ENCODE measurements at regions of chr2 and their contacts with region 1.

Region 1: DNA sequence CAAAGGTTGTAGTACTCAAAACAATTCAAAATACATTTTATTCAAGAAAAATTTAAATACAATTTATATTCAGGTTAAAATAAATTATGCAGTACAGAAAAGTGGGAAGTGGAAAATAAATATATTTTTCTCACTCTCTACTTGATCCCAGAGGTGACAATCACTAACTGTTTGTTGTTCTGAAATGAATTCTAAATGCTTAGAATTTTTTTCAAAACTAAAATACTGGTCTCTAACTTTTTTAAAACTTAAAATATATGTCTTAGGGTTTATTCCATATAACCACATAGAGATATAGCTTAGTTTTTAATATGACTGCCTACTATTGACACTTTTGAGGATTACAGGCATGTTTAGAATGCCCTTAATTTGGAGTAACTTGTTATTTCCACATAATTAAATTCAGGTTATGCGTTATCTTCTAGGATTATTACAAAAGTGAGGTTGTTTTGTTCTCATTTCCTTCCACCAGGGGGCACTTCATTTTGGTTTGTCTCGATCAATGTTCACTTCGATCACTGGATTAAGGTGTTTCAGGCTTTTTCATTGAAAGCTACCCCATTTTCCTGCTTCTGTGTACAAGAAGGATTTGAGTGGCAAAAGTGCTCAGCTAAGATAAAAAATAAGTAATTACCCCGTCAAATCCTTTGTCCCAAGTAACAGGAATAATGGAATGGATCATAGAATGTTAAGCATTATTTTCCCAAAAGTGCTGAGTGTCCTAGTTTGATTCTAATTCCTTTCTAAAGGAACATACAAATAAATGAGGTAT is 27.1 kb upstream of the TFPI start:
- DNase-seq: peak in 1 of 2 experiments; percentile 62
- H3K4me3 ChIP-seq: no peak overlapping the region
- H3K4me3 Mint-ChIP-seq: no peak overlapping the region
- H3K27ac Mint-ChIP-seq: no peak overlapping the region
- H3K4me1 ChIP-seq: peaks cover 17% of the 10 kb centered on the region
- H3K4me1 Mint-ChIP-seq: no peaks in the 10 kb centered on the region
- H3K27me3 ChIP-seq: no peaks in the 10 kb centered on the region
- H3K27me3 Mint-ChIP-seq: peaks cover 4% of the 10 kb centered on the region
- CTCF ChIP-seq: peak; percentile 64 to 71

Region 2: GRCh38 chr2:187499941-187500532 is 81.3 kb before region 1 on chr2:
- CTCF ChIA-PET with region 1: interaction called, 25 read pairs
- POLR2A ChIA-PET with region 1: no interaction called
- intact Hi-C with region 1: loop called (anchors 1 kb)
- DNase-seq: peak; percentile 52 to 71
- H3K4me3 ChIP-seq: no peak overlapping the region
- H3K4me3 Mint-ChIP-seq: no peak overlapping the region
- H3K27ac Mint-ChIP-seq: no peak overlapping the region
- H3K4me1 ChIP-seq: peaks cover 7% of the 10 kb centered on the region; the same call in 1 of the 2 replicates
- H3K4me1 Mint-ChIP-seq: peaks cover 19% of the 10 kb centered on the region
- H3K27me3 ChIP-seq: no peaks in the 10 kb centered on the region
- H3K27me3 Mint-ChIP-seq: no peaks in the 10 kb centered on the region
- CTCF ChIP-seq: peak; percentile 80 to 91

Region 3: DNA sequence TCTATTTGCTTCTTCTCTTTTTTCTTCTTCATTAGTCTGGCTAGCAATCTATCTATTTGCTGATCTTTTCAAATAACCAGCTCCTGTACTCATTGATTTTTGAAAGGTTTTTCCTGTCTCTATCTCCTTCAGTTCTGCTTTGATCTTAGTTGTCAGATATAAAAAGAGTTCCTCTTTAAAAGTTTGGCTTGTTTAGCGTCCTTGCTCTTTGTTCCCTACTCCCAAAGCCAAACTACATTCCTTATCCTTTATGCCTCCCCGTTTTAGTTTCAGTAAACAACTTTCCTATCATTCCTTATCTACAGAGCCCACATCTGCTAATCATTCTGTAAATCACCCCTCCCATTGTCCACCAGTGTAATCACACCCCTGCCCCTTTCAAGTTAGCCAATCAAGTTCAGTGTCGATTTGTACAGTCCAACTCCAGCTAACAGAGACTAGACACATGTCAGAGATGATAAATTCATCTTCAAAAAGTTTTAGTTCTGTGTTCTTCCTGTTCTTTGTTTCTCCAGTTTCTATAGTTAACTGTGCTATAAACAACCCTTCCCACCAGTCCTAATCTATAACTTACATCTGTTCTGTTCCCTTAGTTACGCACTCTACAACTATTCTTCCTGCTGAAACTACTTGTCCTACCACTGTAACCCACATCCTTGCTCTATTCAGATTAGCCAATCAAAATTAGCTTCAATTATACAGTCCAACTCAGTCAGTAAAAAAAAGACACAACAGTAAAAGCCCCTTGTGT is 71.5 kb before region 1 on chr2:
- CTCF ChIA-PET with region 1: no interaction called
- POLR2A ChIA-PET with region 1: no interaction called
- intact Hi-C with region 1: loop called (anchors 2 kb)
- DNase-seq: peak; percentile 65 to 69
- H3K4me3 ChIP-seq: no peak overlapping the region
- H3K4me3 Mint-ChIP-seq: peak overlapping the region; percentile 45
- H3K27ac Mint-ChIP-seq: peak overlapping the region; percentile 56
- H3K4me1 ChIP-seq: peaks cover 32% of the 10 kb centered on the region
- H3K4me1 Mint-ChIP-seq: peaks cover 42% of the 10 kb centered on the region
- H3K27me3 ChIP-seq: no peaks in the 10 kb centered on the region
- H3K27me3 Mint-ChIP-seq: no peaks in the 10 kb centered on the region
- CTCF ChIP-seq: no peak

Region 4: DNA sequence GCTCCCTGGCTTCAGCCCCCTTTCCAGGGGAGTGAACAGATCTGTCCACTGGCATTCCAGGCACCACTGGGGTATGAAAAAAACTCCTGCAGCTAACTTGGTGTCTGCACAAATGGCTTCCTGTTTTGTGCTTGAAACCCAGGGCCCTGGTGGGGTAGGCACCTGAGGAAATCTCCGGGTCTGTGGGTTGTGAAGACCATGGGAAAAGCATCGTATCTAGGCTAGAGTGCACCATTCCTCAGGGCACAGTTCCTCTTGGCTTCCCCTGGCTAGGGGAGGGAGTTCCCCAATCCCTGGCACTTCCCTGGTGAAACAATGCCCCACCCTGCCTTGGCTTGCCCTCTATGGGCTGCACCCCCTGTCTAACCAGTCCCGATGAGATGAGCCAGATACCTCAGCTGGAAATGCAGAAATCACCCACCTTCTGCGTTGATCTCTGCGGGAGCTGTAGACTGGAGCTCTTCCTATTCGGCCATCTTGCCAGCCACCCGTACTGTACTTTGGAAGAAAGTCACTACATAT is 61.1 kb before region 1 on chr2:
- CTCF ChIA-PET with region 1: no interaction called
- POLR2A ChIA-PET with region 1: no interaction called
- intact Hi-C with region 1: no loop called
- DNase-seq: no peak
- H3K4me3 ChIP-seq: no peak overlapping the region
- H3K4me3 Mint-ChIP-seq: no peak overlapping the region
- H3K27ac Mint-ChIP-seq: peak overlapping the region; percentile 58
- H3K4me1 ChIP-seq: no peaks in the 10 kb centered on the region; the same call in 1 of the 2 replicates
- H3K4me1 Mint-ChIP-seq: no peaks in the 10 kb centered on the region
- H3K27me3 ChIP-seq: no peaks in the 10 kb centered on the region
- H3K27me3 Mint-ChIP-seq: no peaks in the 10 kb centered on the region
- CTCF ChIP-seq: no peak

Region 5: GRCh38 chr2:187541086-187542085 is 39.9 kb before region 1 on chr2:
- CTCF ChIA-PET with region 1: no interaction called
- POLR2A ChIA-PET with region 1: interaction called, 6 read pairs
- intact Hi-C with region 1: loop called (anchors 1 kb)
- DNase-seq: no peak
- H3K4me3 ChIP-seq: no peak overlapping the region; the same call in 1 of the 2 replicates
- H3K4me3 Mint-ChIP-seq: peak overlapping the region; percentile 56
- H3K27ac Mint-ChIP-seq: peak overlapping the region; percentile 30
- H3K4me1 ChIP-seq: peaks cover 22% of the 10 kb centered on the region
- H3K4me1 Mint-ChIP-seq: peaks cover 25% of the 10 kb centered on the region
- H3K27me3 ChIP-seq: no peaks in the 10 kb centered on the region
- H3K27me3 Mint-ChIP-seq: no peaks in the 10 kb centered on the region
- CTCF ChIP-seq: no peak

Region 6: GRCh38 chr2:187594801-187595200 is 13.5 kb after region 1 on chr2:
- CTCF ChIA-PET with region 1: no interaction called
- POLR2A ChIA-PET with region 1: no interaction called
- intact Hi-C with region 1: no loop called
- DNase-seq: no peak
- H3K4me3 ChIP-seq: no peak overlapping the region
- H3K4me3 Mint-ChIP-seq: no peak overlapping the region
- H3K27ac Mint-ChIP-seq: no peak overlapping the region
- H3K4me1 ChIP-seq: no peaks in the 10 kb centered on the region
- H3K4me1 Mint-ChIP-seq: no peaks in the 10 kb centered on the region
- H3K27me3 ChIP-seq: no peaks in the 10 kb centered on the region
- H3K27me3 Mint-ChIP-seq: no peaks in the 10 kb centered on the region
- CTCF ChIP-seq: no peak

Region 7: DNA sequence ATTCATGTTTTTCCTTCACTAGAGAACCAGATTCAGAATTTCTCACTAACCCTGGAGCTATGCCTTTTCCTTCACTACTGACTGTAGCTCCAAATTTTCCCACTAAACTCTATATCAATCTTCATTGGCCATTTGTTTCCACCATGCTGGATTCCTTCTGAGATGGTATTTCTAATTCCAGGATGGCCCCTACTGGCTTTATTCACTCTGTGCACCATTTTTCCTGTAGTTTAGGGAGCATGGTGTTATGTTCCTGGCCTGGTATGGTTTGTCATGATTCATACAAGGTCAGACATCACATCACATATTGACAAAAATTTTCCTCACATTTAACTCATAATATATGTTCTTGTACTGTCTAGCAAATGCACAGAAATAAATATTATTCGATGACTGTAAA is 202.1 kb after region 1 on chr2:
- CTCF ChIA-PET with region 1: no interaction called
- POLR2A ChIA-PET with region 1: no interaction called
- intact Hi-C with region 1: loop called (anchors 1 kb)
- DNase-seq: no peak
- H3K4me3 ChIP-seq: no peak overlapping the region
- H3K4me3 Mint-ChIP-seq: no peak overlapping the region
- H3K27ac Mint-ChIP-seq: no peak overlapping the region
- H3K4me1 ChIP-seq: no peaks in the 10 kb centered on the region
- H3K4me1 Mint-ChIP-seq: peaks cover 9% of the 10 kb centered on the region
- H3K27me3 ChIP-seq: no peaks in the 10 kb centered on the region
- H3K27me3 Mint-ChIP-seq: no peaks in the 10 kb centered on the region
- CTCF ChIP-seq: no peak

Region 8: GRCh38 chr2:187842978-187843847 is 261.9 kb after region 1 on chr2:
- CTCF ChIA-PET with region 1: interaction called, 6 read pairs
- POLR2A ChIA-PET with region 1: no interaction called
- intact Hi-C with region 1: loop called (anchors 1 kb)
- DNase-seq: peak in 1 of 2 experiments; percentile 65
- H3K4me3 ChIP-seq: no peak overlapping the region
- H3K4me3 Mint-ChIP-seq: no peak overlapping the region
- H3K27ac Mint-ChIP-seq: no peak overlapping the region
- H3K4me1 ChIP-seq: no peaks in the 10 kb centered on the region
- H3K4me1 Mint-ChIP-seq: peaks cover 7% of the 10 kb centered on the region
- H3K27me3 ChIP-seq: no peaks in the 10 kb centered on the region
- H3K27me3 Mint-ChIP-seq: no peaks in the 10 kb centered on the region
- CTCF ChIP-seq: peak; percentile 67 to 69